CD4-positive, alpha-beta T cell (primary cell): ENCODE measurements at regions of chr16 and their contacts with region 1.

Region 1: DNA sequence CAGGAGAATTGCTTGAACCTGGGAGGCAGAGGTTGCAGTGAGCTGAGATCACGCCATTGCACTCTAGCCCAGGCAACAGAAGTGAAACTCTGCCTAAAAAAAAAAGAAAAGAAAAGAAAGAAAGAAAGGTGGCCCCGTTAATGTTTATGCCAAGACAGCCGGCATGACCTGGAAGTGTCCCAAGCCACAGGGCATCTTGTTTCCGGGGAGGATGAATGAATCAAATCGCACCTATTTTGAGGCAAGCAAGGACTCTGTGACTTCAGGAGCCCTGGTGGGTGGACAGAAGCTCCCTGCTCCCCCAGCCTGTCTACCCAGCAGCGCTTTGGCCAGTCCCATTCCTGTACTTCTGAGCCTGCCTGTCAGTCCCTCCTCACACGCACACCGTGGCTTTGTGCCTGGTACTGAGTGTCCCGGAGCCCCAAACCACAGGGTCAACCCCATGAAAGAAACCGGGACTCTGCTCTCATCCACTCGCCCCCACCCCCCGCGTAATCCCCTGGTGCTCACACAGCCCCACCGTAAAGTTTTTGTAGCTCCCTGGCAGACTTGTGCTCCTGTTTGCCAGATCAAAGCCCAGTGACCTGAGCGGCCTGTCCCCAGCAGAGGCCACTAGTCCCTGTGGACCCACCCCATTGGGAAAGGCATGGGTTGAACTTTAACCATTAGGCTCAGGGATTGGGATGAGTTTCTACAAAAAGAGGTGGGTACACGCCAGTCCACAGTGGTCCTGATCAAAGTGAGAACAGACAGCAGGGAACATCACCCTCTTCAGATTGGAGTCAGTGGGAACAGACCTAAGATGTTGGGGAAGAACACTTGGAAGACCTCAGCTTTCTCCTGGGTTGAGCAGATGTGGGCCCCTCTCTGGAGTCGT is 19.3 kb downstream of the CD2BP2 start:
- DNase-seq: peak in 4 of 14 experiments; percentile 36 to 67 (median 56)
- ATAC-seq: no peak
- H3K4me3 ChIP-seq: peak overlapping the region; percentile 58
- H3K4me3 Mint-ChIP-seq: peak overlapping the region; percentile 87
- H3K27ac ChIP-seq: peak overlapping the region in 1 of 2 donors; percentile 37
- H3K27ac Mint-ChIP-seq: peak overlapping the region; percentile 90
- H3K4me1 ChIP-seq: peaks cover 17% of the 10 kb centered on the region
- H3K4me1 Mint-ChIP-seq: peaks cover 20% of the 10 kb centered on the region
- H3K27me3 ChIP-seq: no peaks in the 10 kb centered on the region
- H3K27me3 Mint-ChIP-seq: no peaks in the 10 kb centered on the region
- CTCF ChIP-seq: no peak

Region 2: DNA sequence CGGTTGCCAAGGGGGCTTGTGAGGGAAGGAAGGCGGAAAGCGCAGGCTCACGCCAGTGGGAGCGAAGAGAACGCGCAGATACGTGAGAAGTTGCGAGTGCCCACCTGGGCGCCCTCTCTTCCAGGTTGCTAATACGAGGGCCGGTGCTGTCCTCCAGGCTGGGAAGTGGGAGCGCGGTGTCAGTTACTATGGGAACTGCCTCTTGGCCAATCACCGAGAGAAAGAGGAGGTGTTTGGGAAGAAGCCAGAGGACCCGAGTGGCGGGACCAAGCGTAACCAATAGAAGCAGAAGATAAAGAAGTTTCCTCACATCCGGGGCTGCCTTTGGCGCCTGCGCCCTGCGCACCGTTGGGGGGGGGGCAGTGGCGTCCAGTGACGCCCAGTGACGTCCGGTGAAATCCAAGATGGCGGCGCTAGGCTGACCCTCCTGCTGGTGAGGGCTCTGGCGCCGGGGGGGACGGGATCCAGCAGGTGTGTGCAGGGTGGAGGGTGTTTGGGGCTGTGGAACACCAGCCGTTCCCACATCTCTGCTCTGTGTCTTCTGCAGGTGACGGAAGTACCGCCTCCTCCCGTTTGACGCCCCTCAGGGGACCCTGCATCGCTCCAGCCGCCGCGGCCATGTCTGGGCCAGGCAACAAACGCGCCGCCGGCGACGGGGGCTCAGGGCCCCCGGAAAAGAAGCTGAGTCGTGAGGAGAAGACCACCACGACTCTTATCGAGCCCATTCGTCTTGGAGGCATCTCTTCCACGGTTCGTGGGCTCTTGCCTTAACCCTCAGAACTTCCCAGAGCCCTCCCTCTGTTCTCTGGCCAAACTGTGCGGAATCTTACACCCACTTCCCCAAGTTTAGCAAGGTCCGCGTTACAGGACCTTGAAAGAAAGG is 426.3 kb after region 1 on chr16 and contains the starts of genes CFAP119 and RNF40:
- CTCF ChIA-PET with region 1: no interaction called
- POLR2A ChIA-PET with region 1: no interaction called
- intact Hi-C with region 1: loop called in 1 of 2 experiments (anchors 10 kb)
- DNase-seq: peak; percentile 70 to 96 (median 85)
- ATAC-seq: peak; percentile 91
- H3K4me3 ChIP-seq: peak within 1 kb of the TSS; percentile 99
- H3K4me3 Mint-ChIP-seq: peak within 1 kb of the TSS; percentile 99
- H3K27ac ChIP-seq: peak within 1 kb of the TSS; percentile 71 to 90
- H3K27ac Mint-ChIP-seq: peak within 1 kb of the TSS; percentile 85
- H3K4me1 ChIP-seq: peaks cover 35% of the 10 kb centered on the region
- H3K4me1 Mint-ChIP-seq: peaks cover 30% of the 10 kb centered on the region
- H3K27me3 ChIP-seq: no peaks in the 10 kb centered on the region
- H3K27me3 Mint-ChIP-seq: no peaks in the 10 kb centered on the region
- CTCF ChIP-seq: no peak
- total RNA-seq, gene CFAP119: 1.7 to 2.2 TPM
- total RNA-seq, gene RNF40: 63.0 to 65.2 TPM